A673 (cell line): ENCODE measurements at regions of chr11 and their contacts with region 1.

Region 1: DNA sequence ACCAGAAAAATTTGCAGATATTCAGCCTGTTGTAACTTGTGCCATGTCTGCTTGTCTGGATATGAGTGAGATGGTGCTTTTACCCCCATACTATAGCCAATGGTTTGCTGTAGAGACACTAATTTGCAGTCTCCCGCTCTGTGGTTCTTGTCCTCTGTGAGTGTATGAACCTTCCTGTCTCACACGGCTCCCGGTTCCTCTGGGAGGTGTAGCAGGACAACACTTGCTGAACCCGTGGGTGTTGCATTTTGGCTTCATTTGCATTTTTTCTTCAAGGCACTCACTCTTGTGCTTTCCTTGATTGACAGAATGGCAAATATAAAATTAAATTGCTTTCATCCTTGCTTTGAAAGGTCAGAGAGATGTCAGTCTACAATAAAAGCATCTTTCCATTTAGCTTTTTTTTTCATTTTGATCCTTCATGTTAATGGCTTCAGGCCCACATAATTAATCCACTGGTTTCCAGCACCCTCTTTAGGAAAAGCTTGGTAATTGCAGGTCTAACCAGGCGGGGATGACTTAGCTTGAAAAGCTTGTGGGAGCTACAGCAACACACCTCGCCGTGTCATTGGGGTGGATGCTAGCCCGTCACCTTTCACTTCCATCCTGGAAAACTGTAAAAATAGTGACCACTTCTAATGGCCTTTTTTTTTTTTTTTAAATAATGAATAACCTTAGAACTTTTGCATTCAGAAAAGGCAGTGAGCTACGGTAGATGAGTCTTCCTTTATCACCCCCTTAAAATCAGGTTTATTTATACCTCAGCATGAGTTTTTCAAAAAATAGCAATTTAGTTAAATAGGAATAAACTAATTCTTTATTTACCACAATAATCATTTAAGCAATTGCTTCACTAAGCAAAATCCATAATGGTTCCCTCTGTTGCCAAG is 27.4 kb upstream of the ST14 start:
- DNase-seq: peak; percentile 81
- H3K4me3 ChIP-seq: no peak overlapping the region
- H3K27ac ChIP-seq: no peak overlapping the region
- H3K4me1 ChIP-seq: no peaks in the 10 kb centered on the region
- H3K27me3 ChIP-seq: no peaks in the 10 kb centered on the region
- CTCF ChIP-seq: peak; percentile 94

Region 2: DNA sequence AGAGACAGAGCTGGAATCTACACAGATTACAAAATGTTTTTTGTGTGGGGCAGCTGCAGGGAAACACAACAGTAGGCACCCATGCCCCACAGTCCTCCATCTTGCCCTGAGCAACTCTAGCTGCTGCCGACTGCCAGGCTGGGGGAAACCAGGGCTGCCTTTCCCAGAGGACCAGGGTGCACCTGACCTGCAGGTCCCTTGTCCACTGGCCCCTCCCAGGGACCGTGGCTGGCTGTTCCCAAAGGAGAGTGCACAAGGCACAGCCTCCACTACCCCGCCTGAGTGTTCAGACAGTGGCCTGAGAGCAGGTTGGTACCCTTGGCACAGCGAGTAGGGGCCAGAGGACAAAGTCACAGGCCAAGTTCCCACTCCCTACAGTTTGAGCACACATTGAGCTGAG is 574.8 kb before region 1 on chr11:
- CTCF ChIA-PET with region 1: no interaction called
- POLR2A ChIA-PET with region 1: no interaction called
- intact Hi-C with region 1: no loop called
- DNase-seq: no peak
- H3K4me3 ChIP-seq: no peak overlapping the region
- H3K27ac ChIP-seq: no peak overlapping the region
- H3K4me1 ChIP-seq: no peaks in the 10 kb centered on the region
- H3K27me3 ChIP-seq: no peaks in the 10 kb centered on the region
- CTCF ChIP-seq: no peak

Region 3: DNA sequence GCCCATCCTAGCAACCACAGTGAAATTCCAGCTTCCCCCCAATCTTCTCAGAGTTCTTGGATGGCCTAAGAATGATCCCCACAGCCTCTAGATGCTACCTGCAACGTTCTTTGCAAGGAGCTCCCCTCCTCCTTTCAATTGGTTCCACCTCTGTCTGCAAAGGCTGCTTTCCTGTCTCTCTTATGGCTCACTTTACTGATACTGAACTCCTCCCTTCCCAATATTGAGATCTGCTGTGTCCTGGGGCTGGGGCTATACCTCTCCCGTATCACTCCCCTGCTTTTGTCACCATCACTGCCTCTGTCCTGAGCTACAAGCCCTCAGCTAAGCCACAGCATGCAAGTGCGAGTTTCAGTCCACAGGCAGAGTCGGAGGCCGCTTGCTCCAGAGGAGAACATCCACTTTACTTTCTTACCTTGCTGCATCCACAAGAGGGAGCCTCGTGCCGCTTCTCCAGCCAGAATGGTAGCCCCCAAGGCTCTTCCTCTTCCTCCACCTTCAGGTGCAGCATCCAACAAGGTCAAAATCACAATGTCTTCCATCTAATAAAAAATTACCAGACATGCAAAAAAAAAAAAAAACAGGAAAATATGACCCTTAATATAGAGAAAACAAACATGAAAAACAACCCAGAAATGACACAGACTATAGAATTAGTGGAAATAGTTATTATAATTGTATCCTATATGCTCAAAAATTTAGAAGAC is 365.2 kb before region 1 on chr11:
- CTCF ChIA-PET with region 1: interaction called, 4 read pairs
- POLR2A ChIA-PET with region 1: no interaction called
- intact Hi-C with region 1: loop called (anchors 5 kb)
- DNase-seq: peak; percentile 66
- H3K4me3 ChIP-seq: no peak overlapping the region
- H3K27ac ChIP-seq: no peak overlapping the region
- H3K4me1 ChIP-seq: no peaks in the 10 kb centered on the region
- H3K27me3 ChIP-seq: no peaks in the 10 kb centered on the region
- CTCF ChIP-seq: peak; percentile 83

Region 4: DNA sequence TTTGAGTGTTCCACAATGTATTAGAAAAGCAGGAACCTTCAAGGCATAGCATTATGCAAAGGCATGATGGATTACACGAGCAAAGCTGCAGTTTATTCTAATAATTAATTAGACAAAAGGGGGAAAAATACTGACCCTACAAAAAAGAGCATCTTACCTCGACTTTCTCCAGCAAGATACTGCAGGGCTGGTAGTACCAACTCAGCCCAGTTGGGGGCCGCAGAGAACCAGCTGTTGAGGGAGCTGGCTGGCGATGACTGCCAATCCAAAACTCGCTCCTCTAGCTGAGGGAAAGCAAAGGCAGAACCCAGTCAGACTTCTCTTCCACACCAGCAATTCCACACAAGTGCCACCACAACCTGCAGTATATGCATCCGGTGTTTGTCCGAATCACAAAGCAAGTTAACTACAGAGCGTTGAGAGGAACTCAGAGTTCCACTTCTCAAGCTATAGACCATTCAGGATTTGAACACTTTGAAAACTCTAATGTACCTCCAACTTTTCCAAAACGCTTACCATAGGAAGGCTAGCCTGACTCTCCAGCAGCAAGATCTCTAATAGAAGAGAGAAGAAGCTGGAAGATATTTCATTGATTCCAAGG is 250.5 kb before region 1 on chr11:
- CTCF ChIA-PET with region 1: interaction called, 34 read pairs
- POLR2A ChIA-PET with region 1: no interaction called
- intact Hi-C with region 1: no loop called
- DNase-seq: peak; percentile 51
- H3K4me3 ChIP-seq: no peak overlapping the region
- H3K27ac ChIP-seq: no peak overlapping the region
- H3K4me1 ChIP-seq: no peaks in the 10 kb centered on the region
- H3K27me3 ChIP-seq: no peaks in the 10 kb centered on the region
- CTCF ChIP-seq: peak; percentile 63

Region 5: DNA sequence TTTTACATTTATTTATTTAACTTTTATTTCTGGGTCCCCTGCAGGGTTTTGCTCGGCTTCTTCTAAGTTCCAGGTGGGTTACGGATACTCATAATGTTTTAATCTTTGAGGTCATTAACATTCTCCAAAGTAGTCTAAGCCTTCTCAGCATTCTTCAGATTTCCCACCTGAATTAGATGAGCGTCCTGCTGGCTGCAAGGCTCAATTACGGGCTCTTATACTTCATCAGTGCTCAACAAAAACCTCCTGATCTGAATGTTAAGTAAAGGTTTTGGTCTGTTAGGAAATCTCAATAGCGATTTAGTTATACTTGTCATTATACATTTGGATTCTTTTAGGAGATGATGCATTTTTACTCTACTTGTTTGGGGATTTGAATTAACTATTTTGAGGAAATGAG is 209.5 kb before region 1 on chr11:
- CTCF ChIA-PET with region 1: interaction called, 54 read pairs
- POLR2A ChIA-PET with region 1: no interaction called
- intact Hi-C with region 1: loop called (anchors 1 kb)
- DNase-seq: no peak
- H3K4me3 ChIP-seq: no peak overlapping the region
- H3K27ac ChIP-seq: no peak overlapping the region
- H3K4me1 ChIP-seq: no peaks in the 10 kb centered on the region
- H3K27me3 ChIP-seq: no peaks in the 10 kb centered on the region
- CTCF ChIP-seq: no peak

Region 6: DNA sequence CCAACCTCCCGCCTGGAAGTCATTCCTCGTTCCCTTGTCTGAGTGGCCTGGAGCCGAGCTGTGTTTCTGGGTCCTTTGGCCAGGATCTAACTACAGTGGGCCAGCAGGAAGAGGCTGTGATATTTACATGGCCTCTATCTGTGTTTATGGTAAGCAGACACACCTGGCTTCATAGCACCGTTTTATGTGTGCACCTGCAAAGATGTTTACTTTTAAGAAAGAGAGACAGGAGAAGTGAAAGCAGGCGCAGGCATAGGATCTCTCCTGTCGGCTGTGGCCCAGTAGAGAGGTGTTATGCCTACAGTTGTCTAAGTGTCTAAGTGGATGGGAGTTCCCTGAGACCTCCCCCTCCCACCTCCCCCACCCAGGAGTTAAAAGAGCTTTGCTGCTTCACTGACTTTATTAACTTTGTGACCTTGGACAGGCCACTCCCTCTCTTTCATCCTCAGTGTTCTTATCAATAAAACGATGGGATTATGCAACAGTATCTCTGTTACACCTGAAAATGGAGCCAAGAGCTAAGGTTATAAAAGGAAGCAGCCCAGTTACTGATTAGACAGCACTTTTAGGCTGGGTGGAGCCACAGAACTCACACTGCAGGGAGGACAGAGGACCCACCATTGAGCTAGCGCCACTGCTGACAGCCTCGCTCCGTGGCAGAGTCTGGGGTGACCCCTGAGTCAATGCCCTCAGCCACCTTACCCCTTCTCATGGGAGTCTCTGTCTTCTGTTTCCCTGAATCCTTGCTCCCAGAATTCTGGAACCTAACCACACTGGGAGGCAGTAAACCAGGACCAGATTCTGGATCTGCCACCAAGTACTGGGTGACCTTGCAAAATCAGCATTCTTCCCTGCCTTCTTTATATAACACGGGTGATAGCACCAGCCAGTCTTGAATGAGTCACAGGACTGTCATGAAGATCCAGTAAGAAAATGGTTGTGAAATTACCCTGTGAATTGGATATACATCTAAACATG is 49.4 kb after region 1 on chr11:
- CTCF ChIA-PET with region 1: no interaction called
- POLR2A ChIA-PET with region 1: no interaction called
- intact Hi-C with region 1: no loop called
- DNase-seq: no peak
- H3K4me3 ChIP-seq: no peak overlapping the region
- H3K27ac ChIP-seq: no peak overlapping the region
- H3K4me1 ChIP-seq: no peaks in the 10 kb centered on the region
- H3K27me3 ChIP-seq: no peaks in the 10 kb centered on the region
- CTCF ChIP-seq: no peak